Activated CD8-positive, alpha-beta memory T cell treated with anti-CD3 and anti-CD28 coated beads, Interleukin-2, amount 10 ng/mL, durations not matched to agents 7 days and 5 days (primary cell): ENCODE measurements at regions of chr1 and their contacts with region 1.

Region 1: DNA sequence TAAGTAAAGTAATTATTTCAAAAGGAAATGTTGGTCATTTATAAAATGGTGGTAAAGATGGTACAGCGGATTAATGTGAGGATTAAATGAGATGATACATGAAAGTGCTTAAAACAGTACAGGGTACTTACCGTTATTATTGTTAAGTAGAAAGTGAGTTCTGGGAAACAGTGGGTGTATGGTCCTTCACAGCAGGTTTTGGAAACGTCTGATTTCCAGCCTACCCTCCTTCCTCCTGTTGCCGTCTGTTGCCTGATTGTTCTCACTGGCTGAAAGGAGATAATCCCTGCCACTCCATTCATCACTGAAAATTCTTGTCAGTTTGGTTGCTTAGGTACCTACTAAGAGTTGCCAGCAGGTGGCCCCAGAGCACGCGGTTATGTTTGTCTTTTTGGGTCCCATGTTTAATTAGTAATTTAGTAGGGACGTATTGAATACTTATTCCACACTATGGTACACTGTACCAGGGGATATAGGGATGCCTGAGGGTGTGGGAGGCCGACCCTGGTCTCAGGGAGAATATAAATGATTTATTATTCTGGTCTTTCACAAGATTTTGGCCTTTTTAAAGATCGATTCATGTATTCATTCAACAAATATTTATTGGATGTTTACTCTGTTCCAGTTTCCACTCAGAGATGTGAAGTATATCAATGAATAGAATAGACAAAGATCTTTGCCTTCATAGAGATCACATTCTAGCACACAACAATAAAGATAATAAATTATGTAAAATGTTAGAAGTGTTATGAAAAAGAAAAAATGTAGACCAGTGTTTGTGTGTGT is 30.8 kb upstream of the RPTN start:
- DNase-seq: peak; percentile 81
- ATAC-seq: peak; percentile 64
- H3K4me3 Mint-ChIP-seq: peak overlapping the region; percentile 68
- H3K27ac Mint-ChIP-seq: no peak overlapping the region
- H3K4me1 Mint-ChIP-seq: peaks cover 6% of the 10 kb centered on the region
- H3K27me3 Mint-ChIP-seq: peaks cover 14% of the 10 kb centered on the region

Region 2: DNA sequence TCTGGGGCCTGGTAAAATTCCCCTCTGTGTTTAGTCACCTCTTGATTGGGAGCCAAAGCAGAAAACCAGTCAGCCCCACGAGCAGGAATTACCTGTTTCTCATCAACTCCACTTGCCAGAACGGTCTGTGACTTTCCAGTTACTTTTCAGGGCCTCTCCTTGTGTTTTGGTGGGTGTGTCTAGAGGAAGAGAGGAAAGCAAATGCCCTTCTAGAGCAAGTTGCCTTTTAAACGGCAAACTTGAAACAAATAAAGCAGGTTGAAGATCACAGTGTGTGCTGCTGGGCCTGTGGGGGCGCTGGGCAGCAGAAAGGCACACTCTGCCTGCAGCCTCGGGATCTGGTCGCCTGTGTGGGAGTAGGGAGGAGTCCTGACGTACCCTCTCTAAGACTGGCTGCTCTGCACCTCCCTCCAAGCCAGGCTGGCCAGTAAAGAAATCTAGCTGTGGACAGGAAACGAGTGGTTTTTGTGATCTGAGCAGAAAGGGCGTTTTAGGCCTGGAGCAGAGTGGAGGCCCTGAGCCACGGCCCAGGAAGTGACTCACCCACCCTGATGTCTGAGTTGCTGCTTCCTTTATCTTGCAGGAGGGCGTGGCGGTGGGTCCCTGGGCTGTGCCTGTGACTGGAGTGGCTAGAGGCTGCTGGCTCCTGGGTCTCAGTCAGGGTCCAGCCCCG is 142.0 kb before region 1 on chr1:
- CTCF ChIA-PET with region 1: interaction called, 201 read pairs
- DNase-seq: peak; percentile 96
- ATAC-seq: peak; percentile 95
- H3K4me3 Mint-ChIP-seq: peak overlapping the region; percentile 75
- H3K27ac Mint-ChIP-seq: peak overlapping the region; percentile 97
- H3K4me1 Mint-ChIP-seq: peaks cover 29% of the 10 kb centered on the region
- H3K27me3 Mint-ChIP-seq: peaks cover 3% of the 10 kb centered on the region

Region 3: GRCh38 chr1:152104859-152105258 is 85.0 kb before region 1 on chr1:
- CTCF ChIA-PET with region 1: interaction called, 21 read pairs
- DNase-seq: no peak
- ATAC-seq: no peak
- H3K4me3 Mint-ChIP-seq: no peak overlapping the region
- H3K27ac Mint-ChIP-seq: no peak overlapping the region
- H3K4me1 Mint-ChIP-seq: no peaks in the 10 kb centered on the region
- H3K27me3 Mint-ChIP-seq: peaks cover 44% of the 10 kb centered on the region

Region 4: DNA sequence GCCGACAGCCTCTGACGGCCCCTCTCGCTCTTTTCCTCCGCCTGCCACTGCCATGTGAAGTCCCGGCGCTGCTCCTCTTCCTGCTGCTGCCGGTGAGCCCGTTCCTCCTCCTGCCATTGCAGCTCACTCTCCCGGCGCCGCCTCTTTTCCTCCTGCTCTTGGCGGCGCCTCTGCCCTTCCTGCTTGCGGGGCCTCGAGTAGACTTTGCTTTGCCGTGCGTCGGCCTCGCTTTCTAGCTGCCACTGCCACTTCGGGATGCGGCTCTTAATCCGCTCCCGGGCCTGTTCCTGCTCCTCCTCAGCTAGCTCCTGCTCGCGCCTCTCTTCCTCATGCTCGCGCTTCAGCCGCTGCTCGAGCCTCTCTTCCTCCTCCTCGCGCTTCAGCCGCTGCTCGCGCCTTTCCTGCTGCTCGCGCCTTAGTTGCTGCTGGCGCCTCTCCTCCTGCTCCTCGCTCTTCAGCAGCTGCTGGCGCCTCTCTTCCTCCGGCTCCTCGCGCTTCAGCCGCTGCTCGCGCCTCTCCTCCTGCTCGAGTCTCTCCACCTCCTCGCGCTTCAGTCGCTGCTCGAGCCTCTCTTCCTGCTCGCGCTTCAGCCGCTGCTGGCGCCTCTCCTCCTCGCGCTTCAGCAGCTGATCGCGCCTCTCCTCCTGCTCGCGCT is 78.9 kb before region 1 on chr1:
- CTCF ChIA-PET with region 1: interaction called, 21 read pairs
- DNase-seq: peak; percentile 51
- ATAC-seq: peak; percentile 72
- H3K4me3 Mint-ChIP-seq: no peak overlapping the region
- H3K27ac Mint-ChIP-seq: no peak overlapping the region
- H3K4me1 Mint-ChIP-seq: no peaks in the 10 kb centered on the region
- H3K27me3 Mint-ChIP-seq: peaks cover 3% of the 10 kb centered on the region

Region 5: GRCh38 chr1:152175544-152175943 is 14.3 kb before region 1 on chr1:
- CTCF ChIA-PET with region 1: interaction called, 49 read pairs
- DNase-seq: no peak
- ATAC-seq: no peak
- H3K4me3 Mint-ChIP-seq: no peak overlapping the region
- H3K27ac Mint-ChIP-seq: no peak overlapping the region
- H3K4me1 Mint-ChIP-seq: no peaks in the 10 kb centered on the region
- H3K27me3 Mint-ChIP-seq: peaks cover 30% of the 10 kb centered on the region

Region 6: GRCh38 chr1:152347116-152347728 is 157.4 kb after region 1 on chr1:
- CTCF ChIA-PET with region 1: interaction called, 15 read pairs
- DNase-seq: peak; percentile 64
- ATAC-seq: peak; percentile 45
- H3K4me3 Mint-ChIP-seq: no peak overlapping the region
- H3K27ac Mint-ChIP-seq: no peak overlapping the region
- H3K4me1 Mint-ChIP-seq: no peaks in the 10 kb centered on the region
- H3K27me3 Mint-ChIP-seq: peaks cover 23% of the 10 kb centered on the region

Region 7: GRCh38 chr1:152440635-152441471 is 251.0 kb after region 1 on chr1:
- CTCF ChIA-PET with region 1: interaction called, 25 read pairs
- DNase-seq: peak; percentile 79
- ATAC-seq: peak; percentile 97
- H3K4me3 Mint-ChIP-seq: no peak overlapping the region
- H3K27ac Mint-ChIP-seq: no peak overlapping the region
- H3K4me1 Mint-ChIP-seq: no peaks in the 10 kb centered on the region
- H3K27me3 Mint-ChIP-seq: peaks cover 15% of the 10 kb centered on the region